ENCODE measurements at regions of chr21 and their contacts with region 1.

Region 1: DNA sequence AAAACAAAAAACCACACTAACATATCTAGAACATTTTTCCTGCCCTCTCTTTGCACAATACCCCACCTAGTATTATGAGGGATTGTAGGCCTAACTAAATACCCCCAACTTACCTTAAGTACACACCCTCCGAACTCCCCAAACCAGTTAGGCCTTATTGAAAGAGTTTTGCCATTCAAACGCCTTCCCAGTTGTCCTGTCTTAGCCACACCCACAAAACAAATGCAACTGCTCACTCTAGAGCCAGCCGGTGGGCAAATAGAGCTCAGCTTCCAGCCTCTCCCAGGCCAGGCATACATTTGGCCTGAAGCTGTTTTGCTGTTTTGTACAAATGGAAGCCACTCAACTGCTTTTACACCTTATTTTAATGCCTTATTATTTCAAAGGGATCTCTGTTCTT is 224.2 kb upstream of the RUNX1 start:
- DNase-seq: peak; percentile 60 to 86
- H3K4me3 ChIP-seq: no peak overlapping the region
- H3K27ac ChIP-seq: peak overlapping the region; percentile 62
- H3K4me1 ChIP-seq: peaks cover 32% of the 10 kb centered on the region
- H3K27me3 ChIP-seq: no peaks in the 10 kb centered on the region
- CTCF ChIP-seq: no peak

Region 2: GRCh38 chr21:35026617-35027562 is 246.4 kb before region 1 on chr21:
- CTCF ChIA-PET with region 1: no interaction called
- POLR2A ChIA-PET with region 1: no interaction called
- intact Hi-C with region 1: no loop called
- DNase-seq: no peak
- H3K4me3 ChIP-seq: no peak overlapping the region
- H3K27ac ChIP-seq: no peak overlapping the region
- H3K4me1 ChIP-seq: no peaks in the 10 kb centered on the region
- H3K27me3 ChIP-seq: no peaks in the 10 kb centered on the region
- CTCF ChIP-seq: no peak

Region 3: DNA sequence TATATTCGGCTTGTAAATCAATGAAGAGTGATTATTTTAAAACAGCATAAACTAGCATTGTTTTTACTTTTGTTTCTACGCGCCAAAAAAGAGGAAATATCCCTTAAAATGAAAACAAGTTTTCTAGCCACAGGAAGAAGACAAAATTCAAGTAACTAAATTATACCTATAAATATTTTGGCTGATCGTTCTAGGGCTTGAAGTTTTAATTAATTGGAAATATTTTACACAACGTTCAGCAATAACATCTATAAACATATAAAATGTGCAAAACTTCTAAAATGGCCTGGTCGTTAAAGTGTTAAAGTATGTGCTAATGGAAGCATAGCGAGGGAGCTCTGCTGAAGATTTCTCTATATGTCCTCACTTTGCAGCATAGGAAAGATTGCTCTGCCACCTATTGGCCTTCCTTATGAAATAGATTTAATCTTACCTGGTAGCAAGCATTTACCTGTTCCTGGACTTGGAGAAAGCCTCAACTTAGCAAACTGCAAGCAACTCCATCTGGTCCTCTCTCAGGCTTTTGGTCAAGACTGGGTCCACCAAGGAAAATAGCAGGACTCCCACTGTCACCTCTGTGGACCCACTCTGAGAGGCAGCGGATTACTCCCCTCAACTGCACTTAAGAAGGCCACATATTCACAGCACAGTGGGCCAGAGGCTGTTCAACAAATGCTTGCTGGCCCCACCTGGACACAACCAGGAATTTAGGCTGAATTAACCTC is 127.1 kb after region 1 on chr21:
- CTCF ChIA-PET with region 1: no interaction called
- POLR2A ChIA-PET with region 1: no interaction called
- intact Hi-C with region 1: loop called (anchors 5 kb)
- DNase-seq: peak; percentile 19 to 77
- H3K4me3 ChIP-seq: no peak overlapping the region
- H3K27ac ChIP-seq: peak overlapping the region; percentile 52
- H3K4me1 ChIP-seq: peaks cover 32% of the 10 kb centered on the region
- H3K27me3 ChIP-seq: no peaks in the 10 kb centered on the region
- CTCF ChIP-seq: peak; percentile 68

Measured in PC-9 (cell line).